ENCODE measurements at regions of chr5 and their contacts with region 1.

Region 1: GRCh38 chr5:129767906-129768380 is 20.0 kb downstream of the MINAR2 start:
- DNase-seq: peak; percentile 87
- ATAC-seq: peak; percentile 80
- H3K4me3 ChIP-seq: no peak overlapping the region
- H3K27ac ChIP-seq: no peak overlapping the region
- H3K4me1 ChIP-seq: no peaks in the 10 kb centered on the region
- H3K27me3 ChIP-seq: no peaks in the 10 kb centered on the region
- CTCF ChIP-seq: peak; percentile 95

Region 2: DNA sequence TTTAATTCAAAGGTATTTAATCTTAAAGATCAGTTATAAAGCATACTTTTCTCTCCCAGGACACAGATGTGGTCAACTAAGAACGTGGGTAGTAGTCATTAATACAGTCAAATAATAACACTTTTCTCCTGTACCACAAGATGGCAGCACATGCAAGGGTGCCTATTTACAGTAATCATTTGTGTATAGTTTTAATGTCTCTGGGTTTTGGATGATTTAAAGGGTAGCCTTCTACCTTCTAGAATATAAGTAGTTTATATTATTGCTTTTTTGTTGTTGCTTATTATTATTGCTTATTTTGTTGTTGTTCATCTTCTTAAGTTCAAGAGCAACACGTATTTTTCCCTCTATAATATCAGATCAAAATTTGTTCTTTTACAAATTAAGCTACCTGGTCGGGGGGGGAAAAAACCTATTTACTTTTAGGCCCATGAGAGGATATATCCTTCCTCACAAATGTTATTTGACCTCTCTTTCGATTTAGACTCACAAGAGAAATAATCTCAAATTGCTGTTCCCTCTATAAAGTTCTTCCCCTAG is 862.3 kb before region 1 on chr5:
- CTCF ChIA-PET with region 1: no interaction called
- POLR2A ChIA-PET with region 1: no interaction called
- intact Hi-C with region 1: loop called (anchors 5 kb)
- DNase-seq: peak; percentile 73
- ATAC-seq: peak; percentile 94
- H3K4me3 ChIP-seq: no peak overlapping the region
- H3K27ac ChIP-seq: no peak overlapping the region
- H3K4me1 ChIP-seq: no peaks in the 10 kb centered on the region
- H3K27me3 ChIP-seq: peaks cover 26% of the 10 kb centered on the region
- CTCF ChIP-seq: peak; percentile 86

Region 3: DNA sequence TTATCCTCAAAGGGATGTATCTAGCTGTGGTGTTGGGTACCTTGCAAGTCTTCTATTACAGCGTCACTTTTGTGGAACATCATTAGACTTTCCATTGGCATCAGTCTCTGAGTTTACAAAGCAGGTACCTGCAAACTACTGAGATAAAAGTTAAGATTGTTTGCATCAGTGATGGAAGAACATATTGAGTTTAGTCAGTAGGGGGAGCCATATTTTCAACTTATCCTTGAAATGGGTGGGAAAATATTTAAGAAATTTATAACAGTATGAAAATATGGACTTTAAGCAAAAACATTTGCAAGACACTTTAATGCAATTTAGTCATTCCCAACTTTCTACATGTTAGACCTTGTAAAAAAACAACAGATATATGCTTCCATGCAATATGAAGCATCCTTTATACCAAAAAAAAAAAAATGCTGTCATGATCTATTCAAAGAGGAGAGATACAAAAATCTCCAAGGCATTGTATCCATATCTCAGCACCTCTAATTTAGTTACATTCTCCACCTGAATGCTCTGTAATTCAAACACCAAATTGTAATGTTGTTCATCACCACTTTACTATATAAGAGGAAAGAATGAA is 406.4 kb before region 1 on chr5:
- CTCF ChIA-PET with region 1: no interaction called
- POLR2A ChIA-PET with region 1: no interaction called
- intact Hi-C with region 1: loop called (anchors 5 kb)
- DNase-seq: peak; percentile 53
- ATAC-seq: no peak
- H3K4me3 ChIP-seq: no peak overlapping the region
- H3K27ac ChIP-seq: no peak overlapping the region
- H3K4me1 ChIP-seq: no peaks in the 10 kb centered on the region
- H3K27me3 ChIP-seq: no peaks in the 10 kb centered on the region; the same call in 1 of the 2 replicates
- CTCF ChIP-seq: peak; percentile 76

Region 4: DNA sequence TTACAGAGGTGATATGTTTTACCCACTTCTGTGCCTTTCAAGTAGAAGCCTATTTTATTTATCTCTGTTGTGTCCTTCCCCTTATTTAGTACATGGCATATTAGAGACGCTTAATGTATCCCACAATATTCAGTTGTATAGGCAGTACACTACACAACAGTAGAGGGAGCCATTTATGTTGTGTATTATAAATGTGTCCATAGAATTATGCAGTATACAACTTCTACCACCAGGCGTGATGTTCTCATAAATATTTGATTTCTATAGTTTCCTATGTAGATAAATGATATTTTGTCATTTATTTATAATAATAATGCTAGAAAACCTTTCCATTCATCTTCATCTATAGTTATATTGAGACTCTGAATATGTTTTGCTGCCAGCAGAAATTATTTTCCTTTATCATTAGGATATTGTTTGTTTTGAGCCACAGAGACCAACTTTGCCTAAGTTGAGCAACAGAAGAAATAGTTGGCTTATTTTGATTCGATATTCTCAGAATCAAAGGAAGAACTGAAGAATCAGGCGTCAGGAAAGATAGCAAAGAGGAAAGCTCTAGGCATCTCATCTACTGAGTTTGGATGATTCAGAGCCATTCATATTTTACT is 226.2 kb before region 1 on chr5:
- CTCF ChIA-PET with region 1: no interaction called
- POLR2A ChIA-PET with region 1: no interaction called
- intact Hi-C with region 1: loop called (anchors 1 kb)
- DNase-seq: peak; percentile 53
- ATAC-seq: peak; percentile 85
- H3K4me3 ChIP-seq: no peak overlapping the region
- H3K27ac ChIP-seq: no peak overlapping the region
- H3K4me1 ChIP-seq: no peaks in the 10 kb centered on the region
- H3K27me3 ChIP-seq: no peaks in the 10 kb centered on the region
- CTCF ChIP-seq: peak; percentile 69

Region 5: DNA sequence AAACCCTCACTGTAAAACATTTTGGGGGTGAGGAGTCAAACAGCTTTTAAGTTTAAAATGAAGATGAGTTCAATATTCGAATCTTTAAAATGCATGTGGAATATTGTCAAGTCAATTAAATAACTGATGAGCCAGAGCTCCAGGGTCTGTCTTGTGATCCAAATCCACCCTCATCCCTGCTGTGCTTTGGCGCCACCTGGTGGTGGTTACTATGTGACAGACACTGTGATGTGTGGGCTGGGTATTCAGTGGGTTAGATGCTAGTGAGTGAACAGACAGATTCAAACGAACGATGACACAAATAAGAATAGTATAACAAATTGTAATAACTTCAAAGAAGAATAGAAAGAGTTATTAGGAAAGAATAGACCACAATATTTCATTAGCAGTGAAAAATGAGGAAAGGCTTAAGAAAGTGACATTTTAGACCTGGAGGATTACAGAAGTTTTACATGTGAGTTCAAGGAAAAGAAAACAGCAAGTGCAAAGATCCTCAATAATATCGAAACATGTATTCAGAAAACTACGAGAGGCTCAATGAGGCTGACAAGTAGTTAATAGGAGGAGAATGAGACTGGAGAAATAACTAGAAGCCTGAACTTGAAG is 84.9 kb after region 1 on chr5:
- CTCF ChIA-PET with region 1: interaction called, 21 read pairs
- POLR2A ChIA-PET with region 1: no interaction called
- intact Hi-C with region 1: loop called (anchors 1 kb)
- DNase-seq: peak; percentile 77
- ATAC-seq: peak; percentile 96
- H3K4me3 ChIP-seq: no peak overlapping the region
- H3K27ac ChIP-seq: no peak overlapping the region
- H3K4me1 ChIP-seq: peaks cover 4% of the 10 kb centered on the region; the same call in 1 of the 2 replicates
- H3K27me3 ChIP-seq: peaks cover 4% of the 10 kb centered on the region; the same call in 1 of the 2 replicates
- CTCF ChIP-seq: peak; percentile 93

Region 6: GRCh38 chr5:131109540-131110255 is 1341.8 kb after region 1 on chr5:
- CTCF ChIA-PET with region 1: no interaction called
- POLR2A ChIA-PET with region 1: no interaction called
- intact Hi-C with region 1: loop called (anchors 1 kb)
- DNase-seq: peak; percentile 64
- ATAC-seq: peak; percentile 81
- H3K4me3 ChIP-seq: no peak overlapping the region
- H3K27ac ChIP-seq: no peak overlapping the region
- H3K4me1 ChIP-seq: no peaks in the 10 kb centered on the region; the same call in 1 of the 2 replicates
- H3K27me3 ChIP-seq: no peaks in the 10 kb centered on the region
- CTCF ChIP-seq: peak; percentile 74